Psoas muscle (tissue), 8 donors: ENCODE measurements at regions of chr1 and their contacts with region 1.

Region 1: DNA sequence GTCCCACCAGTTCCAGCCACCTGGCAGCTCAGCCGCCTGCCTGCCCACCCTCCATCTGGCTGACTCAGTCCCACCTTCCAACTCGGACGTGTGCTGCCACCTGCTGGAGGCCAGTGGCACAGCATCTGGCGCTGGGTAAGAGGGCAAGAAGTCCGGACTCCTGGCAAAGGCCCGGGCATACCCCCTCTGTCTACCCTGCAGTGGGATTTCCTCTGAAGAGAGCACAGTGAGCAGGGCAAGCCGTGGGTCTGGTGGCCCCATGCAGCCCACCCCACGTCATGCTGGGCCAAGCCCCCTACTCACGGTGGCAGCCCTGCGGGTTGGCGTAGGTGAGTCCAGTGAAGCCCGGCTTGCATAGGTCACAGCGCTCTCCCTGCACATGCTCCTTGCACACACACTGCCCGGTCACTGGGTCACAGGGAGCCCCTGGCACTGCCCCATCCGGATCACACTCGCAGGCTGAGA is 24.5 kb downstream of the LAMB3 start:
- DNase-seq: peak; percentile 80 to 91
- ATAC-seq: peak; percentile 67 to 76 (median 72)
- H3K4me3 ChIP-seq: peak overlapping the region; percentile 60
- H3K27ac ChIP-seq: peak overlapping the region; percentile 96
- H3K4me1 ChIP-seq: peaks cover 43% of the 10 kb centered on the region
- H3K27me3 ChIP-seq: no peaks in the 10 kb centered on the region
- CTCF ChIP-seq: peak; percentile 97

Region 2: GRCh38 chr1:209576798-209577197 is 51.0 kb before region 1 on chr1:
- intact Hi-C with region 1: loop called (anchors 2 kb)
- DNase-seq: peak; percentile 80 to 88
- ATAC-seq: peak; percentile 94 to 100 (median 98)
- H3K4me3 ChIP-seq: no peak overlapping the region
- H3K27ac ChIP-seq: no peak overlapping the region
- H3K4me1 ChIP-seq: peaks cover 3% of the 10 kb centered on the region
- H3K27me3 ChIP-seq: peaks cover 0 to 7% (median 3%) of the 10 kb centered on the region in 3 donors
- CTCF ChIP-seq: peak; percentile 95

Region 3: GRCh38 chr1:209601809-209602657 is 25.7 kb before region 1 on chr1:
- intact Hi-C with region 1: loop called (anchors 2 kb)
- DNase-seq: peak in 1 of 2 donors; percentile 61
- ATAC-seq: peak; percentile 91 to 100 (median 96)
- H3K4me3 ChIP-seq: no peak overlapping the region
- H3K27ac ChIP-seq: no peak overlapping the region
- H3K4me1 ChIP-seq: no peaks in the 10 kb centered on the region
- H3K27me3 ChIP-seq: no peaks in the 10 kb centered on the region
- CTCF ChIP-seq: peak; percentile 75

Region 4: GRCh38 chr1:209651148-209651547 is 23.4 kb after region 1 on chr1:
- intact Hi-C with region 1: no loop called
- DNase-seq: peak; percentile 77 to 84
- ATAC-seq: peak in 3 of 4 donors; percentile 40 to 61 (median 60)
- H3K4me3 ChIP-seq: no peak overlapping the region
- H3K27ac ChIP-seq: no peak overlapping the region
- H3K4me1 ChIP-seq: peaks cover 35% of the 10 kb centered on the region
- H3K27me3 ChIP-seq: no peaks in the 10 kb centered on the region
- CTCF ChIP-seq: no peak

Region 5: GRCh38 chr1:209692745-209693504 is 65.2 kb after region 1 on chr1:
- intact Hi-C with region 1: loop called (anchors 5 kb)
- DNase-seq: peak; percentile 77 to 81
- ATAC-seq: peak; percentile 76 to 92 (median 82)
- H3K4me3 ChIP-seq: no peak overlapping the region
- H3K27ac ChIP-seq: no peak overlapping the region
- H3K4me1 ChIP-seq: no peaks in the 10 kb centered on the region
- H3K27me3 ChIP-seq: no peaks in the 10 kb centered on the region
- CTCF ChIP-seq: peak; percentile 85

Region 6: DNA sequence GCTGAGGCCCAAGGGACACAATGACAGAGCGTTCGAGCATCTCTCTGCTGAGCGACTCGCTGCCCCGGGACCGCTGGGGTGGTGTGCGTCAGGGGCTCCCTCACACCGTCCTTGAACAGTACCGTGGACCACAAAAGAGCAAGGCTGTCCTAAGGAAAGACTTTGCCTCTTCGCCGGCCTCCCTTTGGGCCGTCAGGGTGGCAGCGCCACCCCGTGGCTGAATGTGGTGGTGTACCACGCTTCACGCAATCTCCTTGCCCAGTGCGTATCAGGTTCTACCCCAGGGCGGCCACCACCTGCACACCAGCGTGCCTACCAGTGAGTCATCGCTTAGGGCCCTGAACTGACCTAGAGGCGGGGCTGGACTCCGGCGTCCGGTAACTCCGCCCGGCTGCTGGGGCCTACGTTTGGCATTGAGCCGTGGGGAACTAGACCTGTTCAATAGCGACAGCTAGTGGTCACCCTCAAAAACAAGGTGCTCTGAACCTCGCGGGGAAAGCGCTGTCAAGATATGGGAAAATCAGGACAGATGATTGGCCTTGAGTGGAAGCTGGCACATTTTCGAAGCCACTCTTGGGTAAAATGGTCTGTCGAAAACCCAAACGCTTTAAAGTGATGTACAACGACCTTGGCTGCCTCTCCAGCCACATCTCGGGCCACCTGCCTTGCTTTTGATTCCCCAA is 120.0 kb after region 1 on chr1:
- intact Hi-C with region 1: loop called in 1 of 2 experiments (anchors 5 kb)
- DNase-seq: peak; percentile 92 to 95
- ATAC-seq: peak; percentile 100
- H3K4me3 ChIP-seq: peak overlapping the region; percentile 40
- H3K27ac ChIP-seq: peak overlapping the region; percentile 43
- H3K4me1 ChIP-seq: no peaks in the 10 kb centered on the region
- H3K27me3 ChIP-seq: no peaks in the 10 kb centered on the region
- CTCF ChIP-seq: peak; percentile 90